ENCODE measurements at regions of chr1 and their contacts with region 1.

Region 1: GRCh38 chr1:101520302-101520701 is 283.5 kb downstream of the S1PR1 start:
- DNase-seq: peak; percentile 20
- ATAC-seq: peak; percentile 96
- H3K4me3 ChIP-seq: no peak overlapping the region
- H3K27ac ChIP-seq: no peak overlapping the region
- H3K4me1 ChIP-seq: no peaks in the 10 kb centered on the region
- H3K27me3 ChIP-seq: no peaks in the 10 kb centered on the region
- CTCF ChIP-seq: peak; percentile 79 to 89 (median 83)
- EP300 ChIP-seq: no peak
- POLR2A ChIP-seq: no peak
- RAD21 ChIP-seq: peak; percentile 87

Region 2: DNA sequence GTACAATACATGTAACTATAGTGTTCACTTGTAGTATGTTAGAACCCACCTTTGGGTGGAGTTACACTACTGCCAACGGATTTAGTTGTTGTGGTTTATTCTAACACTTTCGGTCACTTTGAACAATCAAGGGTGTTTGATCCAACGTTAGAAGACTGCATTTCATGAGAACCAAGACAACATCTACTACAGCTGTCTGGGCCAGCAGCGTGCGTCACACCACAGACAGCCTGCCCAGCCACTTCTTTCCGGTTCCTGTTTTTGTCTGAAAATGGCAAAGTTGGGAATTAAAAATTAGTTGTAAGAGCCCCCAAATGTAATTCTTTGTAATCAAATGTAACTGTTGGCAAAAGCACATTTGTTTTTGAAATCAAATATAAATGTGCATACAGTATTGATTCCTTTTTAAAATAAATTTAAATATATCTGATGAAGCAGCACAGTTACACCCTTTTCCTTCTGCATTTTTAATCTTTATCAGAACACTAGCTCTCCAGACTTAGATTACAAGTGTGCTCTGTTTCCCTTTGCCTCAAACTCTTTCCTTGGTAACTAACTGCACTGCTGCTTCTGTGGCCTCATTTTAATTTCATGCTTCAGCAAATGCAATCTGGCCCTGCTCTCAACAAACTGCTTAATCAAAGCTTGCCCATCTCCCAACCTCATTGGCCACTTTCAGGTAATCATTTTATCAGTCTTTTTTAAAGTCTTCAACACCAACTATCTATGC is 408.1 kb before region 1 on chr1:
- CTCF ChIA-PET with region 1: no interaction called
- POLR2A ChIA-PET with region 1: no interaction called
- RAD21 ChIA-PET with region 1: no interaction called
- SMC1A ChIA-PET with region 1: no interaction called
- in situ Hi-C with region 1: no loop called
- intact Hi-C with region 1: no loop called
- DNase-seq: peak; percentile 43
- ATAC-seq: peak; percentile 94
- H3K4me3 ChIP-seq: no peak overlapping the region
- H3K27ac ChIP-seq: peak overlapping the region; percentile 27; the same call in 1 of the 2 replicates
- H3K4me1 ChIP-seq: peaks cover 11% of the 10 kb centered on the region
- H3K27me3 ChIP-seq: no peaks in the 10 kb centered on the region
- CTCF ChIP-seq: no peak
- EP300 ChIP-seq: no peak; a peak in 1 of 4 replicates
- POLR2A ChIP-seq: no peak
- RAD21 ChIP-seq: peak; percentile 39; the same call in 1 of the 2 replicates

Region 3: DNA sequence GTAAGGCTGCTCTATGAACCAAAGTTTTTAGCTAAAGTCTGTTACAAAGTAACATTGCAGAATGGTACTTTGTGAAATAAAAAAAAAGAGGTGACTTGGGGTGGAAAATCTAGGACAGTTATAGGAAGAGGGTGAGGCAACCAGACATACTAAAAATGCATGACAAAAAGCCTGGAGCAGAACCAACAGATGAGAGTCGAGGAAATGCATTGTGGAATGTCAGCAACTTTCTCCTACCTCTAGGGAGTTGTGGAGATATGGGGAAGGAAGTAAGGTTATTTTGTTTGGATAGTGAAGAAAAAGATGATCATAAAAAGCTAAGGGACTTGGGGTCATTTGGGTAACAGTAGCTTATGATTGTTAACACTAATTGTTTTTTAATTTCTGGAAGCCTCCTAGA is 12.1 kb after region 1 on chr1:
- CTCF ChIA-PET with region 1: interaction called, 21 read pairs
- POLR2A ChIA-PET with region 1: no interaction called
- RAD21 ChIA-PET with region 1: interaction called, 3 read pairs
- SMC1A ChIA-PET with region 1: interaction called, 22 read pairs
- in situ Hi-C with region 1: no loop called
- intact Hi-C with region 1: no loop called
- DNase-seq: no peak
- ATAC-seq: no peak
- H3K4me3 ChIP-seq: no peak overlapping the region
- H3K27ac ChIP-seq: no peak overlapping the region
- H3K4me1 ChIP-seq: no peaks in the 10 kb centered on the region
- H3K27me3 ChIP-seq: no peaks in the 10 kb centered on the region
- CTCF ChIP-seq: no peak
- EP300 ChIP-seq: no peak
- POLR2A ChIP-seq: no peak
- RAD21 ChIP-seq: no peak

Region 4: GRCh38 chr1:101769520-101769919 is 249.2 kb after region 1 on chr1:
- CTCF ChIA-PET with region 1: interaction called, 3 read pairs
- POLR2A ChIA-PET with region 1: no interaction called
- RAD21 ChIA-PET with region 1: no interaction called
- SMC1A ChIA-PET with region 1: interaction called, 3 read pairs
- in situ Hi-C with region 1: no loop called
- intact Hi-C with region 1: loop called (anchors 10 kb)
- DNase-seq: no peak
- ATAC-seq: peak; percentile 82
- H3K4me3 ChIP-seq: no peak overlapping the region
- H3K27ac ChIP-seq: no peak overlapping the region
- H3K4me1 ChIP-seq: no peaks in the 10 kb centered on the region
- H3K27me3 ChIP-seq: no peaks in the 10 kb centered on the region
- CTCF ChIP-seq: peak; percentile 36 to 50 (median 40); a peak in 5 of 6 replicates
- EP300 ChIP-seq: no peak
- POLR2A ChIP-seq: no peak
- RAD21 ChIP-seq: peak; percentile 42

Region 5: DNA sequence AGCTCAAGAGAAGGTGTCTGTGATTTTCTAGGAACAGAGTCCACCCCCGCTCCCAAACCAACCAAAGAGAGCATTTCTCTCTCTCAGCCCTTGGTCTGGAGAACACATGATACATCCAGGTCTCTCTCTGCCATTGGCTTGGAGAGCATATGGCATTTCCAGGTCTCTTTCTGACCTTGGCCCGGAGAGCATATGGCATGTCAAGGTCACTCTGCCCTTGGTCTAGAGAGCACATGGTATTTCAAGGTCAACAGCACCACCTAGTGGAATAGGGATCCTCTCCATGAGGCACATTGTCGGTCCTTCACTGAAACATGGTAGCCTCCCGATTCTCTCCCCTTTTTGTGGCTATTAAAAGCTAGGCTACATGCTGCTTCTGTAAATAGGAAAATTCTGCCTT is 914.1 kb after region 1 on chr1:
- CTCF ChIA-PET with region 1: interaction called, 4 read pairs
- POLR2A ChIA-PET with region 1: no interaction called
- RAD21 ChIA-PET with region 1: interaction called, 9 read pairs
- SMC1A ChIA-PET with region 1: interaction called, 4 read pairs
- in situ Hi-C with region 1: loop called (anchors 10 kb)
- intact Hi-C with region 1: loop called (anchors 2 kb)
- DNase-seq: no peak
- ATAC-seq: peak; percentile 86
- H3K4me3 ChIP-seq: no peak overlapping the region
- H3K27ac ChIP-seq: no peak overlapping the region
- H3K4me1 ChIP-seq: no peaks in the 10 kb centered on the region
- H3K27me3 ChIP-seq: no peaks in the 10 kb centered on the region
- CTCF ChIP-seq: peak; percentile 44 to 57 (median 53); a peak in 5 of 6 replicates
- EP300 ChIP-seq: no peak
- POLR2A ChIP-seq: no peak
- RAD21 ChIP-seq: peak; percentile 58